ENCODE measurements at regions of chr22 and their contacts with region 1.

Region 1: DNA sequence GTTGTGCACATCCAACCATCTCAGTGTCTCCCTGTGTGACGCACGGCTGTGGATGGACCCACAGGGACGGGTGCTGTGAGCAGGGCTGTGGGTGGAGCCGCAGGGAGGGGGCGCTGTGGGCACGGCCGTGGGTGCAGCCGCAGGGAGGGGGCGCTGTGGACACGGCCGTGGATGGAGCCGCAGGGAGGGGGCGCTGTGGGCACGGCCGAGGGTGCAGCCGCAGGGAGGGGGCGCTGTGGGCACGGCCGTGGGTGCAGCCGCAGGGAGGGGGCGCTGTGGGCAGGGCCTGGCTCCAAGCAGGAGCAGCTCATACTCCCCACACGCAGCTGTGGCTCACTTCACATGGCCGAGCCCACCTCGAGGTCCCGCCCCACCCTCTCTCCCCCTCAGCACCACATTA is 6.0 kb upstream of the MAPK11 start:
- DNase-seq: peak in 4 of 5 donors; percentile 68 to 86 (median 73)
- ATAC-seq: peak; percentile 53 to 87 (median 81)
- H3K4me3 ChIP-seq: no peak overlapping the region
- H3K27ac ChIP-seq: peak overlapping the region in 1 of 12 donors; percentile 17
- H3K4me1 ChIP-seq: peaks cover 0 to 27% (median 15%) of the 10 kb centered on the region in 12 donors
- H3K27me3 ChIP-seq: peaks cover 0 to 9% (median 0%) of the 10 kb centered on the region in 9 donors
- CTCF ChIP-seq: peak; percentile 42 to 77 (median 58)
- POLR2A ChIP-seq: no peak

Region 2: GRCh38 chr22:50306753-50307749 is 30.9 kb after region 1 on chr22 and contains the start of gene PLXNB2:
- intact Hi-C with region 1: loop called in 3 of 10 experiments (anchors 2 to 5 kb)
- DNase-seq: peak; percentile 87 to 92 (median 90)
- ATAC-seq: peak; percentile 35 to 73 (median 65)
- H3K4me3 ChIP-seq: peak within 1 kb of the TSS; percentile 55 to 99 (median 90)
- H3K27ac ChIP-seq: peak within 1 kb of the TSS; percentile 84 to 98 (median 93)
- H3K4me1 ChIP-seq: peaks cover 22 to 74% (median 60%) of the 10 kb centered on the region in 12 donors
- H3K27me3 ChIP-seq: no peaks in the 10 kb centered on the region
- CTCF ChIP-seq: no peak
- POLR2A ChIP-seq: peak in 1 of 2 donors; percentile 40
- total RNA-seq, gene PLXNB2: 44.4 to 139 (median 57.9) TPM